ENCODE measurements at regions of chr11 and their contacts with region 1.

Region 1: DNA sequence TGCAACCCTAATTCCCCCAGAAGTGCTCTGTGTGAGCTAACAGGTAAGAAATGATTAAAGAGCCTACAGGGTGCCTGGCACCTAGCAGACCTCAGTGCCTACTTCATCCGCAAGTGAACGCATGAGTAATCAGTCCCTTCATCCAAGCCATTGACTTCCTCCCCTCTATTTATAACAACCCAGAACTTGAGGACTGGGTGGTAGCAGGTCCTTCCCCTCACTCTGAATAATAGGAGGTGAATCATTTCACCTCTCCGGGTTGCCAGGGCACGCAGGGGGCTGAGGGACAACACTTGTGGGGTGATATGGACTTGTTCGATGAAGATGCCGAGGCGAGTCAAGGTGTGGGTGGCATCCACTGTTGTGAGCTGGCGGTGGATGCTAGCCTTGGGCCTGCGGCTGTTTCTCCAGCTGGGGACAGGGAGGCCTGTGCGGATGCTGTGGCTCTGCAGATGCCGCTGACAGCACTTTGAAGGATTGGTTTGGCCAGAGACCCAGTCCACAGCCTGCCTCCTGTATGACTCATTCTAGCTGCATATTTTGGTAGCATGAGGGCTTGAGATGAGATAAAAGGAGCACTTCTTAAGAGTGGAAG is 11.7 kb upstream of the SORL1-AS1 start:
- DNase-seq: peak; percentile 58
- H3K4me3 ChIP-seq: no peak overlapping the region
- H3K27ac ChIP-seq: peak overlapping the region; percentile 3
- H3K4me1 ChIP-seq: peaks cover 32% of the 10 kb centered on the region
- H3K27me3 ChIP-seq: peaks cover 0 to 2% of the 10 kb centered on the region in 2 experiments
- CTCF ChIP-seq: no peak
- POLR2A ChIP-seq: no peak

Region 2: GRCh38 chr11:120612513-120613263 is 851.8 kb before region 1 on chr11:
- CTCF ChIA-PET with region 1: no interaction called
- POLR2A ChIA-PET with region 1: no interaction called
- dilution Hi-C with region 1: no loop called
- intact Hi-C with region 1: loop called (anchors 5 kb)
- DNase-seq: peak; percentile 57
- H3K4me3 ChIP-seq: no peak overlapping the region
- H3K27ac ChIP-seq: no peak overlapping the region
- H3K4me1 ChIP-seq: peaks cover 10% of the 10 kb centered on the region
- H3K27me3 ChIP-seq: no peaks in the 10 kb centered on the region
- CTCF ChIP-seq: no peak
- POLR2A ChIP-seq: no peak

Region 3: DNA sequence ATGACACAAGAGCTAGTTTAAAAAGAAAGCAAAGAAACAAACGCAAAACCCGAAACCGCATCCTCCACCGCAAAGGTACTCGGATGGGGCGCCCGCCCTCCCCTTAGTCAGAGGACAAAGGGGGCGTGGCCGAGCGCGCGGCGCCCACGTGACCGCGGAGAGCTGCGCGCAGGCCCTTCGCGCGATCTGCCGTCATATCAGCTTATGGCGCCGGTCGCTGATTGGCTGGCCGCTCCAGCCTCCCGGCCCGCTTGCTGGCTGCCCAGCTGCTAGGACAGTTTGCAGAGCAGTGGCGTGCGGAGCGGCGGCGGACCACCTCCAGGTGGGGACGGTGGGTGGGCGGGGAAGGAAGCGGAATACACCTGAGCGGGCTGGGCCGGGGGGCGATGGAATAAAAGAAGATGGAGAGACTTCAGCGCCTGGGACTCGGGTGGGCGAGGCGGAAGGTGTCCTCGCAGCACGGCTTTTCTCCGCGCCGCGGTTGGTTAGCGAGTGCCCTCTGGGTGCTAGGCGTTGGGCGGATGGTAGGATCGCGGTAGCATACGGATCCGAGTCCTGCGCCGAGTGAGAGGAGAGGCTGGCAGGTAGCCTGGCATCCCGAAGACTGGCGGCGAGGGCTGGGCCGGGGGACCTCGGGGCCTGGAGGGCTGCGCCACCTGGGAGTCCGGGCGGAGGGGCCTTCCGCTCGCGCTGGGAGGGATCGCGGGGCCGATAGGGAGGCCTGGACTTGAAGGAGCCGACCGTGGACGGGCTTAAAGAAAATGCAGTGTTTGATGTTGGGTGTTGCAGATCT is 171.8 kb before region 1 on chr11 and contains the start of gene SC5D:
- CTCF ChIA-PET with region 1: no interaction called
- POLR2A ChIA-PET with region 1: no interaction called
- dilution Hi-C with region 1: no loop called
- intact Hi-C with region 1: loop called (anchors 2 kb)
- DNase-seq: peak; percentile 94
- H3K4me3 ChIP-seq: peak within 1 kb of the TSS; percentile 50 to 92 (median 86)
- H3K27ac ChIP-seq: peak within 1 kb of the TSS; percentile 58
- H3K4me1 ChIP-seq: peaks cover 15% of the 10 kb centered on the region
- H3K27me3 ChIP-seq: peaks cover 3% of the 10 kb centered on the region in 2 experiments
- CTCF ChIP-seq: no peak
- POLR2A ChIP-seq: peak; percentile 81
- total RNA-seq, gene SC5D: 40.0 and 40.2 TPM in 2 replicates

Region 4: GRCh38 chr11:121451986-121452608 is 12.4 kb before region 1 on chr11 and contains the start of gene SORL1:
- CTCF ChIA-PET with region 1: interaction called, 5 read pairs
- POLR2A ChIA-PET with region 1: no interaction called
- dilution Hi-C with region 1: no loop called
- intact Hi-C with region 1: loop called (anchors 1 kb)
- DNase-seq: peak; percentile 26
- H3K4me3 ChIP-seq: peak within 1 kb of the TSS in 2 of 3 experiments; percentile 1 to 38
- H3K27ac ChIP-seq: no peak within 1 kb of the TSS
- H3K4me1 ChIP-seq: no peaks in the 10 kb centered on the region
- H3K27me3 ChIP-seq: peaks cover 41 to 44% of the 10 kb centered on the region in 2 experiments
- CTCF ChIP-seq: peak; percentile 41 to 64
- POLR2A ChIP-seq: no peak
- total RNA-seq, gene SORL1: 0.16 and 0.31 TPM in 2 replicates

Region 5: GRCh38 chr11:121482231-121483129 is 18.0 kb after region 1 on chr11:
- CTCF ChIA-PET with region 1: interaction called, 10 read pairs
- POLR2A ChIA-PET with region 1: no interaction called
- dilution Hi-C with region 1: no loop called
- intact Hi-C with region 1: loop called (anchors 1 kb)
- DNase-seq: peak; percentile 57
- H3K4me3 ChIP-seq: no peak overlapping the region
- H3K27ac ChIP-seq: peak overlapping the region; percentile 69
- H3K4me1 ChIP-seq: peaks cover 17% of the 10 kb centered on the region
- H3K27me3 ChIP-seq: no peaks in the 10 kb centered on the region
- CTCF ChIP-seq: no peak
- POLR2A ChIP-seq: peak; percentile 21

Region 6: GRCh38 chr11:121566279-121567168 is 102.1 kb after region 1 on chr11:
- CTCF ChIA-PET with region 1: no interaction called
- POLR2A ChIA-PET with region 1: no interaction called
- dilution Hi-C with region 1: no loop called
- intact Hi-C with region 1: no loop called
- DNase-seq: no peak
- H3K4me3 ChIP-seq: no peak overlapping the region
- H3K27ac ChIP-seq: no peak overlapping the region
- H3K4me1 ChIP-seq: no peaks in the 10 kb centered on the region
- H3K27me3 ChIP-seq: no peaks in the 10 kb centered on the region
- CTCF ChIP-seq: no peak
- POLR2A ChIP-seq: no peak